PC-3 (cell line): ENCODE measurements at regions of chr11 and their contacts with region 1.

Region 1: DNA sequence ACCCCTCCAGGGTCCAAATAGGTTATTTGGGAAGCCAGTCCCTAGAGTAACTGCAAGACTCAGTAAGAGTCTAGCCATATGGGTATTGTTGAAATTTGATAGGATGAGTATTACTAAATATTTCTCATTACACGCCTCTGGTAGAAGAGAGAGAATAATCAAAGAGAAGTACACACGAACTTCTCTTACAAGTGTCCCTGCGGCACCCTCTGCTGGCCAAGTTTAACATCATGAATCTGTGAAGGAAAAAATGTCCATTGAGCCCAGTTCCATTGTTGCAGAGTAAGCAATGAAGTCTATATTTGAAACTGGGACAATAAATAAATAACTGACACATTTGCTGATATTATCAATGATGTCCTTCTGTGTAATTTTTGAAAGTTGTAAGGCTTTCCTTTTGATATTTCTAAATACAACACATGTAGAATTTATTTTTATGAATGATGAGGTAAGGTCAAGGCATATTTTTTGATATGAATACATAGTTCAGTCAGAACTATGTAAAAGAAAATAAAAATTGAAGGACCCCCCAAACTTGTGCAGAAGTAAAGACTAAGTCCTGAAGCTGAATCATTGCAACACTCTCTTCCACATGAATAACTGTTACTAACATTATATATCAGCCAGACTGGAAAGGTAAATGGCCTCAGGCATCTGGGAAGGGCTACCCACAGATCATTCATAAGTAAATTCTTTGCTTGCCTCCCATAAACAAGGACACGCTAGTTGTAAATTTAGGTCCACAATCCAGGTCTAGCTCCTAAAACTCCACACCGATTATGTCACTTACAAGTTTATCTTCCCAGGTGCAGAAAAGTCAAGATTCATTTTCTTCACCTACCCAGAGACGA is 10.0 kb downstream of the OR51L1 start:
- DNase-seq: peak; percentile 65
- ATAC-seq: peak; percentile 38; the same call in 1 of the 2 replicates
- H3K4me3 ChIP-seq: no peak overlapping the region
- H3K27ac ChIP-seq: 0 out of 2 replicates have a peak overlapping the region, but pooled peaks have one; percentile 9
- H3K4me1 ChIP-seq: no peaks in the 10 kb centered on the region
- H3K27me3 ChIP-seq: no peaks in the 10 kb centered on the region
- CTCF ChIP-seq: peak; percentile 74

Region 2: GRCh38 chr11:4636962-4637661 is 367.5 kb before region 1 on chr11 and contains the start of gene OR51D1:
- CTCF ChIA-PET with region 1: no interaction called
- POLR2A ChIA-PET with region 1: no interaction called
- intact Hi-C with region 1: loop called (anchors 1 kb)
- DNase-seq: peak; percentile 73
- ATAC-seq: peak; percentile 92
- H3K4me3 ChIP-seq: no peak within 1 kb of the TSS
- H3K27ac ChIP-seq: no peak within 1 kb of the TSS
- H3K4me1 ChIP-seq: no peaks in the 10 kb centered on the region
- H3K27me3 ChIP-seq: no peaks in the 10 kb centered on the region; the same call in 1 of the 2 replicates
- CTCF ChIP-seq: peak; percentile 73
- total RNA-seq, gene OR51D1: not detected in 2 replicates